ENCODE measurements at regions of chr16 and their contacts with region 1.

Region 1: DNA sequence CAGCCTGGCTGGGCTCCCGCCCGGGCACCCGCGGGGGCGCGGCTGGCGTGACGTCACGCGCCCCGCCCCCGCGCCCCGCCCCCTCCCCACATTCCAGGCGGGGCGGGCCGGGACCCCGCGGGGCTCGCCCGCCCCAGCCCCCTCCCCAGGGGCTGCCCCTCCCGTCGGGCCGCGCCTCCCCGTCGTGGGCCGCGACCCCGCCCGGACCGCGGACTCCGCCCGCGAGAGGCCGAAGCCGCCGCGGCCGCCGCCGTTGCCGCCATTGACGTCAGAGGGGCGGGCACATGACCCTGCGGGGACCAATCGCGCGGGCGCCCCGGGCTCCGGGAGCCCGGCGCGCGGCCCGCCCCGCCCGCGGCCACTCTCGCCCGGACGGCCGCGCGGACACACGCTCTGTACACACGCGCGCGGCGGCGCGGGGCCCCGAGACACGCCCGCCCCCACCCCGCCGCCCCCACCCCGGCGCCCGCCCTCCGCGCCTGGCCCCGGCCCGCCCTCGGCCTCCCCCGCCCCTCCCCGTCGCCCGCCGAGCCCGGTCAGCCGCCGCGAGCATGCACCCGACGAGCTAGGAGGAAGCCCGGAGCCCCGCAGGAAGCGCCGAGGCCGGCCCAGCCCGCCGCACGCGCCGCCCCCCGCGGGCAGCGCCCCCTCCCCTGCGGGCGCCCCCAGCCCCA is at the start of gene CMIP:
- DNase-seq: peak; percentile 79 to 89 (median 81)
- H3K4me3 ChIP-seq: peak within 1 kb of the TSS; percentile 57 to 62
- H3K4me3 Mint-ChIP-seq: peak within 1 kb of the TSS; percentile 86 to 94 (median 88)
- H3K27ac ChIP-seq: peak within 1 kb of the TSS; percentile 63
- H3K27ac Mint-ChIP-seq: peak within 1 kb of the TSS; percentile 94 to 97 (median 96)
- H3K4me1 ChIP-seq: peaks cover 42% of the 10 kb centered on the region
- H3K4me1 Mint-ChIP-seq: peaks cover 20 to 54% (median 41%) of the 10 kb centered on the region in 4 donors
- H3K27me3 ChIP-seq: no peaks in the 10 kb centered on the region
- H3K27me3 Mint-ChIP-seq: no peaks in the 10 kb centered on the region
- total RNA-seq, gene CMIP: 33.2 to 36.4 TPM

Region 2: GRCh38 chr16:80997139-80997798 is 447.3 kb before region 1 on chr16:
- CTCF ChIA-PET with region 1: no interaction called
- POLR2A ChIA-PET with region 1: no interaction called
- intact Hi-C with region 1: loop called (anchors 1 kb)
- DNase-seq: peak in 4 of 5 donors; percentile 15 to 29 (median 24)
- H3K4me3 ChIP-seq: peak overlapping the region; percentile 36 to 70
- H3K4me3 Mint-ChIP-seq: peak overlapping the region; percentile 91 to 98 (median 96)
- H3K27ac ChIP-seq: peak overlapping the region; percentile 63
- H3K27ac Mint-ChIP-seq: peak overlapping the region; percentile 93 to 98 (median 94)
- H3K4me1 ChIP-seq: peaks cover 35% of the 10 kb centered on the region
- H3K4me1 Mint-ChIP-seq: peaks cover 21 to 67% (median 56%) of the 10 kb centered on the region in 4 donors
- H3K27me3 ChIP-seq: no peaks in the 10 kb centered on the region
- H3K27me3 Mint-ChIP-seq: no peaks in the 10 kb centered on the region

Region 3: GRCh38 chr16:81095953-81096717 is 348.4 kb before region 1 on chr16 and contains the start of gene GCSH:
- CTCF ChIA-PET with region 1: no interaction called
- POLR2A ChIA-PET with region 1: no interaction called
- intact Hi-C with region 1: loop called (anchors 2 kb)
- DNase-seq: peak; percentile 97 to 99 (median 99)
- H3K4me3 ChIP-seq: peak within 1 kb of the TSS; percentile 69 to 73
- H3K4me3 Mint-ChIP-seq: peak within 1 kb of the TSS; percentile 67 to 90 (median 85)
- H3K27ac ChIP-seq: peak within 1 kb of the TSS; percentile 37
- H3K27ac Mint-ChIP-seq: peak within 1 kb of the TSS; percentile 18 to 83 (median 48)
- H3K4me1 ChIP-seq: peaks cover 11% of the 10 kb centered on the region
- H3K4me1 Mint-ChIP-seq: peaks cover 4 to 17% (median 5%) of the 10 kb centered on the region in 4 donors
- H3K27me3 ChIP-seq: no peaks in the 10 kb centered on the region
- H3K27me3 Mint-ChIP-seq: no peaks in the 10 kb centered on the region
- total RNA-seq, gene GCSH: 3.5 to 4.9 TPM

Region 4: DNA sequence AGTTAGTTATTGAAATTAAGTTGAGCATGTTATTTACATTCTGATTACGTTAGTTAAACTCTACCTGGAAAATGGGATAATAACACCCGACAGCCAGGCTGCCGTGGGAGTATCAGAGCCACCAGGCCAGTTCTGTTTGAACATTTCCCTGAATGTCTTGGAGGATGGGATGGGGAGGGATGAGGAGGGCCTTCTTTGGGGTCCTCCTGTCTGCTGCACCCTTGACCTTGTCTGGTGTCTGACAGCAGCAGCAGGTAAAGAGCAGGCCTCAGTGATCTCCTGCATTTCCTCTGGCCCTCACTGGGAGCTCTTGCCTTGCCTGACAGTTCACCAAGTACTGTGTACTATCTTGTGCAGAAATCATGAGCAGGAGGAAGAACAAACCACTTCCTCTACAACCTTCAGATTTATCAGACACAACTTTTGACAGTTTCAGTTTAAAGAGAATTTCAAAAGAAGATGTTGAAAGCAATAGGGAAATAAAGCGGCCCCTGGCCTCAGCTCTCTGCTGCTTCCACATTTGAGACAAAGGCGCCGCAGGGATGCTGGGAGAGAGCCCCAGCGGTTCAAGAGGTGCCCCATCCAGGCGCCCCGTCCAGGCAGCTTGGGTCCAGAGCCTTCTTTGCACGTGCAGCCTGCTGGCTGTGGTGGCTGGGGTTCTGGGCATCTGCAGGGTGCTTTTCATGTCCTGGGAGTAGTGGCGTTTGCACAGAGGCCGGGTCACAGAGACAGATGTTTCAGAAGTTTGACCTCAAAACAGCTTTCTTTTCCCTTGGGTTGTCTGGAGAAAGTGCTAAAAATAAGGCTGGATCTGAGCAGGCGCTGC is 25.3 kb after region 1 on chr16:
- CTCF ChIA-PET with region 1: interaction called, 4 read pairs
- POLR2A ChIA-PET with region 1: interaction called, 42 read pairs
- intact Hi-C with region 1: loop called (anchors 2 kb)
- DNase-seq: peak; percentile 56 to 76 (median 70)
- H3K4me3 ChIP-seq: peak overlapping the region in 1 of 2 donors; percentile 48
- H3K4me3 Mint-ChIP-seq: peak overlapping the region; percentile 76 to 88 (median 80)
- H3K27ac ChIP-seq: peak overlapping the region; percentile 48
- H3K27ac Mint-ChIP-seq: peak overlapping the region; percentile 88 to 97 (median 94)
- H3K4me1 ChIP-seq: peaks cover 81% of the 10 kb centered on the region
- H3K4me1 Mint-ChIP-seq: peaks cover 47 to 80% (median 67%) of the 10 kb centered on the region in 4 donors
- H3K27me3 ChIP-seq: no peaks in the 10 kb centered on the region
- H3K27me3 Mint-ChIP-seq: no peaks in the 10 kb centered on the region

Region 5: GRCh38 chr16:81493755-81494433 is 49.3 kb after region 1 on chr16:
- CTCF ChIA-PET with region 1: no interaction called
- POLR2A ChIA-PET with region 1: no interaction called
- intact Hi-C with region 1: no loop called
- DNase-seq: no peak
- H3K4me3 ChIP-seq: no peak overlapping the region
- H3K4me3 Mint-ChIP-seq: no peak overlapping the region
- H3K27ac ChIP-seq: no peak overlapping the region
- H3K27ac Mint-ChIP-seq: peak overlapping the region in 5 of 7 donors; percentile 13 to 85 (median 32)
- H3K4me1 ChIP-seq: peaks cover 14% of the 10 kb centered on the region
- H3K4me1 Mint-ChIP-seq: peaks cover 18 to 54% (median 40%) of the 10 kb centered on the region in 4 donors
- H3K27me3 ChIP-seq: no peaks in the 10 kb centered on the region
- H3K27me3 Mint-ChIP-seq: no peaks in the 10 kb centered on the region

Region 6: DNA sequence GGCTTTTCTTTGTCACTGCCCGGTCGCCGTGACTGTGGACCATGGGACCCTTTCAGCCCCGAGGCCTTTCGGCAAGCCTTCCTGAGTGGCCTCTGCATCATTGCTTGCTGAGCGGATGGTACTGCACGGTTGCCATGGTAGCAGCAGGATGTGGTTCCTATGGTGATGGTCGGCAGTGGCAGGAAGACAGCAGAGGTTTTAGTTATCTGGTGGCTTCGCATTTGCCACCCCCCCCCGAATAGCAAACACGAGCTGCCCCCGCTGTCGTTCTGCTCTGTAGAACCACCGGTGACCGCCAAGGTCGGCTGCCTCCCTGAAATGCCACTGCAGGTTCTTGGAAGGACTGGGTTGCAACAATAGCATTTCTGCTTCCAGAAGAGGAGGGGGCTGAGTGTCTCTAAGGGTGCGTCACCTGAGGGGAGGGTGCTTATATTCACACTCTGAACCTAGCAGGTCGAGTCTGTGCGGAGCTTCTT is 76.6 kb after region 1 on chr16:
- CTCF ChIA-PET with region 1: no interaction called
- POLR2A ChIA-PET with region 1: interaction called, 5 read pairs
- intact Hi-C with region 1: loop called (anchors 1 kb)
- DNase-seq: peak; percentile 84 to 90 (median 87)
- H3K4me3 ChIP-seq: no peak overlapping the region
- H3K4me3 Mint-ChIP-seq: peak overlapping the region; percentile 15 to 72 (median 58)
- H3K27ac ChIP-seq: peak overlapping the region; percentile 63
- H3K27ac Mint-ChIP-seq: peak overlapping the region; percentile 93 to 98 (median 97)
- H3K4me1 ChIP-seq: peaks cover 51% of the 10 kb centered on the region
- H3K4me1 Mint-ChIP-seq: peaks cover 28 to 64% (median 50%) of the 10 kb centered on the region in 4 donors
- H3K27me3 ChIP-seq: no peaks in the 10 kb centered on the region
- H3K27me3 Mint-ChIP-seq: no peaks in the 10 kb centered on the region

Region 7: GRCh38 chr16:81616321-81617055 is 171.9 kb after region 1 on chr16:
- CTCF ChIA-PET with region 1: no interaction called
- POLR2A ChIA-PET with region 1: interaction called, 17 read pairs
- intact Hi-C with region 1: loop called (anchors 1 kb)
- DNase-seq: peak; percentile 75 to 89 (median 84)
- H3K4me3 ChIP-seq: peak overlapping the region; percentile 10 to 53
- H3K4me3 Mint-ChIP-seq: peak overlapping the region; percentile 63 to 82 (median 76)
- H3K27ac ChIP-seq: peak overlapping the region; percentile 75
- H3K27ac Mint-ChIP-seq: peak overlapping the region in 2 of 7 donors; percentile 96 to 97
- H3K4me1 ChIP-seq: peaks cover 25% of the 10 kb centered on the region
- H3K4me1 Mint-ChIP-seq: peaks cover 9 to 19% (median 12%) of the 10 kb centered on the region in 4 donors
- H3K27me3 ChIP-seq: no peaks in the 10 kb centered on the region
- H3K27me3 Mint-ChIP-seq: no peaks in the 10 kb centered on the region